ENCODE measurements at regions of chr19 and their contacts with region 1.

Region 1: GRCh38 chr19:7680606-7681339 is at the start of gene TRAPPC5:
- H3K4me3 ChIP-seq: peak within 1 kb of the TSS; percentile 91
- H3K27ac ChIP-seq: peak within 1 kb of the TSS; percentile 79; the same call in 1 of the 2 replicates
- H3K4me1 ChIP-seq: no peaks in the 10 kb centered on the region
- CTCF ChIP-seq: peak; percentile 75

Region 2: GRCh38 chr19:7355151-7355820 is 325.5 kb before region 1 on chr19:
- CTCF ChIA-PET with region 1: interaction called, 11 read pairs
- POLR2A ChIA-PET with region 1: no interaction called
- H3K4me3 ChIP-seq: no peak overlapping the region
- H3K27ac ChIP-seq: no peak overlapping the region
- H3K4me1 ChIP-seq: no peaks in the 10 kb centered on the region
- CTCF ChIP-seq: no peak

Region 3: DNA sequence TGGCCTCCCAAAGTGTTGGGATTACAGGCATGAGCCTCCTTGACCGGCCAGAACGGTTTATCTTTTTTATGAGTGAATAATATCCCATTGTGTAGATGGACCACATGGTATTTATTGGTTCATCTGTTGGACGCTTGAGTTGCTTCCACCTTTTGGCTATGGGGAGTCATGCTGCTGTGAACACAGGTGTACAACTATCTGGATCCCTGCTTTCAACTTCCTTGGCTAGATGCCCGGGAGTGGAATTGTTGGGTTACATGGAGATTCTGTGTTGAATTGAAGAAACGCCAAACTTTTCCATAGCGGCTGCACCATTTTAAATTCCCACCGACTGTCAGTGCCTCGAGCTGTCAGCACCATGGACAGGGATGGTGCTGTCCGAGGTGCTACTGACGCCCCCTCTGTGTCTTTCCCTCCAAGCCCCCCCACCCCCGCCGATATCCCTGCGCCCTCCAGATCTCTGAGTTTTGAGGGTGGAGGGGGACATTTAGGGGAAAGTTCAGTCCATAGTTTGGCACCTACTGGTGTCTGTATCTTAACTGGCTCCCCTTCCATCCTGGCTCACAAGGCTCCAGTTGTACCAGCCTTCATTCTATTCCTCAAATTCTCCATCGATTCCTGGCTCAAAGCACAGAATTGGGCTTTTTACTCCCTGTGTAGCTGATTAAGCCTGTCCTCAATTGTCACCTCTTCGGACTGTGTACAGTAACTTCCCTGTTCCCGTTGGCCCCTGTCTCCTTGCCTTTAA is 118.0 kb before region 1 on chr19:
- CTCF ChIA-PET with region 1: interaction called, 23 read pairs
- POLR2A ChIA-PET with region 1: interaction called, 10 read pairs
- H3K4me3 ChIP-seq: no peak overlapping the region
- H3K27ac ChIP-seq: no peak overlapping the region
- H3K4me1 ChIP-seq: no peaks in the 10 kb centered on the region
- CTCF ChIP-seq: no peak

Region 4: GRCh38 chr19:7652061-7652641 is 28.6 kb before region 1 on chr19:
- CTCF ChIA-PET with region 1: interaction called, 14 read pairs
- POLR2A ChIA-PET with region 1: no interaction called
- H3K4me3 ChIP-seq: peak overlapping the region; percentile 16; the same call in 1 of the 2 replicates
- H3K27ac ChIP-seq: no peak overlapping the region; the same call in 1 of the 2 replicates
- H3K4me1 ChIP-seq: no peaks in the 10 kb centered on the region
- CTCF ChIP-seq: peak; percentile 83

Region 5: GRCh38 chr19:7663706-7664105 is 17.1 kb before region 1 on chr19:
- CTCF ChIA-PET with region 1: interaction called, 23 read pairs
- POLR2A ChIA-PET with region 1: interaction called, 4 read pairs
- H3K4me3 ChIP-seq: no peak overlapping the region
- H3K27ac ChIP-seq: no peak overlapping the region
- H3K4me1 ChIP-seq: no peaks in the 10 kb centered on the region
- CTCF ChIP-seq: no peak

Region 6: DNA sequence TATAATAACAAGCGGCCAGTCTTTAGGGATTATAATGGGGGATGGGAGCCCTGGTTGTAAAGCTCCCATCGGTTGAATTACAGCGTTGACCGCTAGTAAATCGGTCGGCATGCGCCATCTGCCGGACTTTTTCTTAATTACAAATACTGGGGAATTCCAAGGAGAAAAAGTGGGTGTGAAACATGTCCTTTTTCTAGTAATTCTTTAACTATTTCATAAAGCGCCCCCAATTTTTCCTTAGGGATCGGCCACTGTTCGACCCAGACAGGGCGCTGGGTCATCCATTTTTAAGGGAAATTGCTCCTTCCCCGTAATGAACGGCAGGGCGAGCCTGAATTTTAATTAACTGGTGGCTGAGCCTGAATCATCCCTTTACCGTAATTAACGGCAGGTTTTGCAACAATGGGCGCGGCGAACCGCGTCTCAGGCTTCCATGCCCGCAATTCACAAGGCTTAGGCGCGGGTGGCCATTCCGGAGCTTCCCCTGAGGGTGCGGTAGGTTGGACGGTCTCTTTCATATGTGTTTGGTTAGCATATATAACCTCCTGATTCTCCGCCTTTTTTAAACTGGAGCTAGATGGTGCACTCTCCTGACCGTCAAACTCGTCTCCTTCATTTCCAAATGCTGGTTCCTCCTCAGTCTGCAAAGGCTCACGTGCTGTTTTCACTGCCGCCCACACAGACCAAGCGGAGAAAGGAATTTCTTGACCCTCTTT is 119.0 kb after region 1 on chr19:
- CTCF ChIA-PET with region 1: interaction called, 15 read pairs
- POLR2A ChIA-PET with region 1: no interaction called
- H3K4me3 ChIP-seq: no peak overlapping the region
- H3K27ac ChIP-seq: no peak overlapping the region
- H3K4me1 ChIP-seq: no peaks in the 10 kb centered on the region
- CTCF ChIP-seq: 0 out of 2 replicates have a peak, but pooled peaks have one; percentile 23

Measured in HEK293 (cell line).